WTC11 (cell line): ENCODE measurements at regions of chr15 and their contacts with region 1.

Region 1: DNA sequence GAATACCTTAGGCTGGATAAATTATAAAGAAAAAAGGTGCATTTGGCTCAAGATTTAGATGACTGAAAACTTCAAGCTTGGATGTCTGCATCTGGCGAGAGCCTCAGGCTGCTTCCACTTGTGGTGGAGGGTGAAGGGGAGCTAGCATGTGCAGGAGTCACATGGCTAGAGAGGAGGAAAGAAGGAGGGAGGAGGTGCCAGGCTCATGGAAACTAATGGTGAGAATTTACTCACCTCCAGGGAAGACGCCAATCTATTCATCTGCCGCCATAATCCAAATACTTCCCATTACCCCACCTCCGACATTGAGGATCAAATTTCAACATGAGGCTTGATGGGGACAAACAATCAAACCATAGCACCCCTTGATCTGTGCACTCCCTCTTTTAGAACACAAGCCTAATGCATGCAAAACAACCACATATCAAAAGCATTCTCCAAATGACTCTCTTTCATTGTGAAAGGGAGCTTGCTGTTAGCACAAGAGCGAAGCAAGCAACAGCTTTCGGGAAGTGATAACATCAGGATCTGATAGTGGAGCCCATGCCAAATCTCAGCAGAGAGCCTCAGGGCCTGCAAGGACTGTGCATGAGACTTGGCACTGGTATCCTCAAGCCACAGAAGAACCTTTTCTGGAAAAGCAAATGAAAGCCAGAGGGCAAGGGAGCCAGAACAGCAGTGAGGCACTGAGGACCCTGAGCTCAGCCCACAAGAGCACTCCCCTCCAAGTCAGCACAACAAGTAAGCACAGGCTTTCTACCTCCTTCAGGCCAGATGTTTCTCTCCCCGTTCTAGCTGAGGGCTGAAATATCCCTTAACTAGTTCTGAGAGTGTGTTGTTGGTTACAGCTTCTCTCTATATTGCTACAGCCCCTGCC is 50.2 kb upstream of the THBS1 start:
- DNase-seq: no peak
- ATAC-seq: peak; percentile 85
- H3K4me3 Mint-ChIP-seq: no peak overlapping the region
- H3K27ac Mint-ChIP-seq: peak overlapping the region; percentile 25; the same call in 1 of the 2 replicates
- H3K4me1 Mint-ChIP-seq: peaks cover 19% of the 10 kb centered on the region
- H3K27me3 Mint-ChIP-seq: peaks cover 19% of the 10 kb centered on the region
- CTCF ChIP-seq: no peak

Region 2: GRCh38 chr15:39543651-39544050 is 12.9 kb after region 1 on chr15:
- CTCF ChIA-PET with region 1: interaction called, 10 read pairs
- POLR2A ChIA-PET with region 1: no interaction called
- DNase-seq: peak; percentile 53
- ATAC-seq: peak; percentile 99
- H3K4me3 Mint-ChIP-seq: no peak overlapping the region
- H3K27ac Mint-ChIP-seq: no peak overlapping the region
- H3K4me1 Mint-ChIP-seq: peaks cover 6% of the 10 kb centered on the region; the same call in 1 of the 2 replicates
- H3K27me3 Mint-ChIP-seq: no peaks in the 10 kb centered on the region
- CTCF ChIP-seq: no peak